ENCODE measurements at regions of chr11 and their contacts with region 1.

Region 1: DNA sequence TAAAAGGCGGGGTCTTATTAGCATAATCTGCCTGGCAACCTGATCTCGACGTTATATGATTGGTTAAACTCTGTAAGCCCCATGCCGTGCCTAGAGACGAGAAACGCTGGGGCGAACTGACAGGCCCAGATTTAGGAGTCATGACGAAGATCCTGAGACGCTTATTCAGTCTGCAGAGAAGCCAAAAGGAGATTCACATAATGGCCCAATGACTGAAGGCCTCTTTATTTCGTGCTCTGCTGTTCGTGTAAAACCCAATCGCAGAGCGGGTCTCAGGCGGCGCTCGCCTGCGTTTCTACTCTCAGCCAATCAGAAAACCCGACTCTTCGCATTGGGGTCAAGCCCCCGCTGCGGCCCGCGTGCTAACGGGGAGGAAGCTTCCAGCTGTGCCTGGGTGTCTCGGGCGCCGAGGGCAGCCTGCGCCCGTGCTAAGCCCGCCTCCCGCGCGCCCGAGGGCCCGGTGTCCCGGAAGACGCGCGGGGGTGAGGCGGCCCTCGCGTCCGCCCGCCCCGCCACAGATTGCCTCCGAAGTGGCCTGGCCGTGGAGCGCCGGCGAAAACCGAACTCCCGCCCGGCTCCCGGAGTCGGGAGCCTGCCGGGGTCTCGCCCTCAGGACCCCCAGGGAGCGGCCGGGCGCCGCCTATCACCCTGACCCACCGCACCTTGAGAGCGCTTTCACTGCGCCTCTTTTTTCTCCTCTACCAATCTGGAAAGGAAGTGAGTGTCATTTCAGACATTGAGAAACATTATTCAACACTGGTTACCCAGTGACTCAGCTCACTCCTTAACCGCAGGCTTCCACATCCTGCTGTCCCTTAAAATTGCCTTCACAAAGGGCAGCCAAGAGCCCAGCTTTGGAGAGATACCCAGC is 446 bp upstream of the PRDM10 start:
- DNase-seq: peak; percentile 94
- H3K4me3 Mint-ChIP-seq: peak overlapping the region; percentile 98
- H3K27ac Mint-ChIP-seq: peak overlapping the region; percentile 100
- H3K4me1 Mint-ChIP-seq: peaks cover 28% of the 10 kb centered on the region
- H3K27me3 Mint-ChIP-seq: no peaks in the 10 kb centered on the region

Region 2: DNA sequence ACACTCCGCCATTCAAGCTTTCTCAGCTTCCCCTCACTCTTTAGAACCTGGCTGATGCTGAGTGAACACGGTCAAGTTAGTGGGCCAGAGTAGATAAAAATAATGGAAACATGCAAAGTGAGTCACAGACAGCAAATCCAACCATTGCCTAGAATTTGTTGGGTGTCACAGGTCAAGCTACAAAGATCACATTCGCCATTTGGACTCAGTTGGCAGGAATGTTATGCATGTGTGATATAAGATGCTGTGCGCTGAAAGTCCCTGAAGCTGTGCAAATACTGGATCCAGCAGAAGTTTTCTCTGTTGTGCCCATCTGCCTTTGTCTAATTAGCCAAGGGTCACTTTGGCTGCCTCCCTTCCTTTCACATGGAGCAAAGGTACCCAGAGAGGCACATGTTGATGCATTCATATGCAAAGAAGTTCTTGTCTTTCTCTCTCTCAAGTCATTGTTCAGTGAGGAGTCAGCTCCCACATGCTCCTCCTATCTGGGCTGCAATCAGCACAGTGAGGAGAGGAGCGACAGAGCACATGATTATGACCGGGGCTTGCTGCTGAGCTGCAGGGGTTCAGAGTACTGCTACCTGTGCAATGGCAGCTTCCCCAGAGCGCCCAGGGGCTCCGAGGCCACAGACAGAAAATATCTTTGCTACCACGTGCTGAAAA is 1269.5 kb before region 1 on chr11:
- CTCF ChIA-PET with region 1: no interaction called
- intact Hi-C with region 1: loop called (anchors 10 kb)
- DNase-seq: peak; percentile 58
- H3K4me3 Mint-ChIP-seq: peak overlapping the region; percentile 65
- H3K27ac Mint-ChIP-seq: peak overlapping the region; percentile 32
- H3K4me1 Mint-ChIP-seq: peaks cover 93% of the 10 kb centered on the region
- H3K27me3 Mint-ChIP-seq: no peaks in the 10 kb centered on the region

Region 3: GRCh38 chr11:129639300-129639699 is 363.8 kb before region 1 on chr11:
- CTCF ChIA-PET with region 1: no interaction called
- intact Hi-C with region 1: loop called (anchors 2 kb)
- DNase-seq: peak; percentile 76
- H3K4me3 Mint-ChIP-seq: no peak overlapping the region
- H3K27ac Mint-ChIP-seq: peak overlapping the region; percentile 98
- H3K4me1 Mint-ChIP-seq: peaks cover 74% of the 10 kb centered on the region
- H3K27me3 Mint-ChIP-seq: peaks cover 3% of the 10 kb centered on the region

Region 4: GRCh38 chr11:129895126-129896041 is 107.7 kb before region 1 on chr11 and contains the start of gene NFRKB:
- CTCF ChIA-PET with region 1: no interaction called
- intact Hi-C with region 1: loop called (anchors 1 kb)
- DNase-seq: peak; percentile 83
- H3K4me3 Mint-ChIP-seq: peak within 1 kb of the TSS; percentile 87
- H3K27ac Mint-ChIP-seq: peak within 1 kb of the TSS; percentile 79
- H3K4me1 Mint-ChIP-seq: peaks cover 27% of the 10 kb centered on the region
- H3K27me3 Mint-ChIP-seq: no peaks in the 10 kb centered on the region
- total RNA-seq, gene NFRKB: 34.0 to 36.4 TPM

Region 5: GRCh38 chr11:130118636-130119387 is 115.7 kb after region 1 on chr11:
- CTCF ChIA-PET with region 1: interaction called, 3 read pairs
- intact Hi-C with region 1: loop called (anchors 1 kb)
- DNase-seq: peak; percentile 35
- H3K4me3 Mint-ChIP-seq: no peak overlapping the region
- H3K27ac Mint-ChIP-seq: no peak overlapping the region
- H3K4me1 Mint-ChIP-seq: peaks cover 46% of the 10 kb centered on the region
- H3K27me3 Mint-ChIP-seq: peaks cover 7% of the 10 kb centered on the region

Region 6: GRCh38 chr11:130403271-130403804 is 400.3 kb after region 1 on chr11:
- CTCF ChIA-PET with region 1: no interaction called
- intact Hi-C with region 1: no loop called
- DNase-seq: no peak
- H3K4me3 Mint-ChIP-seq: no peak overlapping the region
- H3K27ac Mint-ChIP-seq: no peak overlapping the region
- H3K4me1 Mint-ChIP-seq: peaks cover 11% of the 10 kb centered on the region
- H3K27me3 Mint-ChIP-seq: peaks cover 13% of the 10 kb centered on the region

Region 7: GRCh38 chr11:130916238-130916855 is 913.3 kb after region 1 on chr11 and contains the start of gene SNX19:
- CTCF ChIA-PET with region 1: no interaction called
- intact Hi-C with region 1: loop called (anchors 5 kb)
- DNase-seq: peak; percentile 90
- H3K4me3 Mint-ChIP-seq: peak within 1 kb of the TSS; percentile 78
- H3K27ac Mint-ChIP-seq: peak within 1 kb of the TSS; percentile 57
- H3K4me1 Mint-ChIP-seq: peaks cover 32% of the 10 kb centered on the region
- H3K27me3 Mint-ChIP-seq: no peaks in the 10 kb centered on the region
- total RNA-seq, gene SNX19: 18.0 to 21.6 TPM

Measured in activated naive CD4-positive, alpha-beta T cell treated with anti-CD3 and anti-CD28 coated beads for 36 hours (primary cell).